ENCODE measurements at regions of chr16 and their contacts with region 1.

Region 1: GRCh38 chr16:87636072-87636684 is 33.9 kb downstream of the JPH3 start:
- DNase-seq: peak; percentile 94
- H3K4me3 Mint-ChIP-seq: peak overlapping the region; percentile 57
- H3K27ac Mint-ChIP-seq: no peak overlapping the region
- H3K4me1 Mint-ChIP-seq: peaks cover 15% of the 10 kb centered on the region
- H3K27me3 Mint-ChIP-seq: no peaks in the 10 kb centered on the region

Region 2: GRCh38 chr16:87203060-87203656 is 433.0 kb before region 1 on chr16:
- CTCF ChIA-PET with region 1: interaction called, 8 read pairs
- intact Hi-C with region 1: loop called (anchors 1 kb)
- DNase-seq: peak; percentile 68
- H3K4me3 Mint-ChIP-seq: no peak overlapping the region
- H3K27ac Mint-ChIP-seq: no peak overlapping the region
- H3K4me1 Mint-ChIP-seq: no peaks in the 10 kb centered on the region
- H3K27me3 Mint-ChIP-seq: peaks cover 8% of the 10 kb centered on the region

Region 3: GRCh38 chr16:87324411-87325275 is 311.5 kb before region 1 on chr16:
- CTCF ChIA-PET with region 1: no interaction called
- intact Hi-C with region 1: loop called (anchors 2 kb)
- DNase-seq: peak; percentile 52
- H3K4me3 Mint-ChIP-seq: no peak overlapping the region
- H3K27ac Mint-ChIP-seq: no peak overlapping the region
- H3K4me1 Mint-ChIP-seq: peaks cover 2% of the 10 kb centered on the region
- H3K27me3 Mint-ChIP-seq: no peaks in the 10 kb centered on the region

Region 4: GRCh38 chr16:87416826-87417527 is 219.2 kb before region 1 on chr16:
- CTCF ChIA-PET with region 1: interaction called, 39 read pairs
- intact Hi-C with region 1: loop called (anchors 1 kb)
- DNase-seq: peak; percentile 75
- H3K4me3 Mint-ChIP-seq: no peak overlapping the region
- H3K27ac Mint-ChIP-seq: peak overlapping the region; percentile 24
- H3K4me1 Mint-ChIP-seq: no peaks in the 10 kb centered on the region
- H3K27me3 Mint-ChIP-seq: no peaks in the 10 kb centered on the region

Region 5: DNA sequence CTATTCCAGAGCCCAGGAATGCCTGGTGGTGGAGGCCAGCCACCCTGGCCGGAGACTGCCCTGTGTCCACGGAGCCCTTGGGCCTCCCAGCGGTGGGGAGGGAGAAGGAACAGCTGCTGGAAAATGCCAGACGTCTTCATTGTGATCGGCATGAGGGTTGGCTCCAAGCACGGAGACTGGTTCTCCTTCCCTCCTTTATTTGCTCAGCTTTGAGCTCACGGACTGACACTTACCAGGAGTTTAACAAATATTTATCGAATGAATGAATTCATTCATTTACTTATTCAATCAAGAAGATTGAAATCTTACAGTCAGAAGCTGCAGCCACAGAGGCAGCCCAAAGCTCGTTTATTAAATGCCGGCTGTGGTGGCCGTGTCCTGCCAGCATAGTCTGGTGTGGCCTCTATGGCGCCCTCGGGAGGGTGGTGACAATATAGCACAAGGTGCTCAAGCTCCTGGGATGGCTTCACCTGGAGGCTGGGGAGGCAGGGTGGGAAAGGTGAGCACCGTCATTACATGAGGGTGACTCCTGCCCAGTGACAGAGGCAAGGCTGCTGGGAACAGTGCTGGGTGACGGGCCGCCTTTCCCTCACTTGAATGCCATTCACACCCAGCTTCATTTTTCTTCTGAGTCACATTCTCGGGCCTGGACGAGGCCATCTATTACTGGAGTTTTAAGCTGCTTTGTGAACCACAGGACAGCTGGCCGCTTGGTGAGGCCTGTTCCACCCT is 64.9 kb before region 1 on chr16:
- CTCF ChIA-PET with region 1: interaction called, 11 read pairs
- intact Hi-C with region 1: no loop called
- DNase-seq: peak; percentile 58
- H3K4me3 Mint-ChIP-seq: no peak overlapping the region
- H3K27ac Mint-ChIP-seq: no peak overlapping the region
- H3K4me1 Mint-ChIP-seq: no peaks in the 10 kb centered on the region
- H3K27me3 Mint-ChIP-seq: peaks cover 7% of the 10 kb centered on the region

Region 6: GRCh38 chr16:87592018-87592712 is 44.0 kb before region 1 on chr16:
- CTCF ChIA-PET with region 1: interaction called, 19 read pairs
- intact Hi-C with region 1: loop called (anchors 1 kb)
- DNase-seq: no peak
- H3K4me3 Mint-ChIP-seq: no peak overlapping the region
- H3K27ac Mint-ChIP-seq: no peak overlapping the region
- H3K4me1 Mint-ChIP-seq: peaks cover 5% of the 10 kb centered on the region
- H3K27me3 Mint-ChIP-seq: peaks cover 15% of the 10 kb centered on the region

Region 7: GRCh38 chr16:87687126-87687910 is 51.1 kb after region 1 on chr16:
- CTCF ChIA-PET with region 1: no interaction called
- intact Hi-C with region 1: no loop called
- DNase-seq: no peak
- H3K4me3 Mint-ChIP-seq: no peak overlapping the region
- H3K27ac Mint-ChIP-seq: no peak overlapping the region
- H3K4me1 Mint-ChIP-seq: peaks cover 3% of the 10 kb centered on the region
- H3K27me3 Mint-ChIP-seq: no peaks in the 10 kb centered on the region